Activated T-helper 1 cell treated with anti-CD3 and anti-CD28 coated beads, Interleukin-12 subunit alpha, Interleukin-12 subunit beta, Interleukin-2, Interleukin-4 antibody, amounts not matched to agents 30 ng/mL and 10 ng/mL and 1 ng/mL, durations not matched to agents 14 hours and 24 hours and 36 hours (primary cell): ENCODE measurements at regions of chr3 and their contacts with region 1.

Region 1: GRCh38 chr3:42502429-42503250 is at the start of gene VIPR1:
- DNase-seq: peak; percentile 85
- H3K4me3 Mint-ChIP-seq: peak within 1 kb of the TSS; percentile 86
- H3K27ac Mint-ChIP-seq: no peak within 1 kb of the TSS
- H3K4me1 Mint-ChIP-seq: peaks cover 31% of the 10 kb centered on the region
- H3K27me3 Mint-ChIP-seq: peaks cover 26% of the 10 kb centered on the region
- total RNA-seq, gene VIPR1: 0.69 and 0.88 TPM in 2 replicates

Region 2: DNA sequence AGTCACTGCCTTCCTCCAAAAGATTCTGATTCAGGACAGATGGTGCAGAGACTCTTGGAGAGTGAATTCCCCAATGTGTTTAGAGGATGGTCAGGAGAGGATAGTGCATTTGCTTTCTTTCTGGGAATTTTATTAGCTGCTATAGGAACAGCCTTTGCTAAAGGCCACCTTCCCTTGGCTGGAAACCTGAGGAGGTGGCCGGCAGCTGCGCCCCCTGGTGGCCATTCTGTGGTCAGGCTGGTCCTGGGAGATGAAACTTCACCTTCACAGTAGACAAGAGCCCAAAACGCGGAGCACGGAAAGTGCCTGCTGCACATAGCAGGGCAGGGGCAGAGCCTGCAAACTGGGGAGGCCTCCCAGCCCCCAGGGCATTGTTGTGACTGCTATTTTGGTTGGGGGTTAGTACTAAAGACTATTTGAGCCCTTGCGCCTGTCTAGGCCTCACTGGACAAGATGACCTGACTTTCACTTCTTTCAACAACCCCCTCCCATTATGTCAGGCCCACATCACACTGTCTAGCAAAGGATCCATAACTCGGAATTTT is 44.8 kb after region 1 on chr3:
- intact Hi-C with region 1: loop called (anchors 1 kb)
- DNase-seq: peak; percentile 41
- H3K4me3 Mint-ChIP-seq: no peak overlapping the region
- H3K27ac Mint-ChIP-seq: no peak overlapping the region
- H3K4me1 Mint-ChIP-seq: no peaks in the 10 kb centered on the region
- H3K27me3 Mint-ChIP-seq: no peaks in the 10 kb centered on the region